Keratinocyte (primary cell): ENCODE measurements at regions of chr10 and their contacts with region 1.

Region 1: DNA sequence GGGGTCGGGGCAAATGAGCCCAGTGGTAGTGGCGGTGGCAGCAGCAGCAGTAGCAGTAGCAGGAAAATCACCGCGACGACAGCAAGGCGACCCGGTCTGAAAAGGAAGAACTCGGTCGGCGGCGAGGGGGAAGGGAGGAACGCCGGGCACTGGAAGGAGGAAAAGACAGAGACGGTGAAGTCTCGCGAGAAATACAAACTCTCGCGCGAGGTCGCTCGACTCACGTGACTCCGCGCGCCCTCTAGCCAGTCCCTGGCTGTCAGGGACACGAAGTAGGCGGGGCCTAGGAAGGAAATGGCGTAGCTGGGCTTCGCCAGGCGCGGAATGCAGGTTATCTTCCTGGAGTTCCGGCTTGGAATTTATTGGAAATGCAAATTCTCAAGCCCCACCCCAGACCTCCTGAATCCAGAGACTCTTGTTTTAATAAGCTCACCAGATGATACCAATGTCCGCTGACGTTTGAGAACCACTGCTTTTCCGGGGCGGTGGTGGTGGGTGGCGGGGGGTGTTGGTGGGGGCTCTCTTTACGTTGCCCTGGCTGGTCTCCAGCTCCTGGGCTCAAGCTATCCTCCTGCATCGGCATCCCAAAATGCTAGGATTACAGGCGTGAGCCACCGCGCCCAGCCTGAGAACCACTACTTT is at the start of gene SMNDC1:
- DNase-seq: peak; percentile 93
- H3K4me3 ChIP-seq: peak within 1 kb of the TSS; percentile 78 to 97 (median 92)
- H3K27ac ChIP-seq: peak within 1 kb of the TSS; percentile 84
- H3K4me1 ChIP-seq: peaks cover 33% of the 10 kb centered on the region
- H3K27me3 ChIP-seq: no peaks in the 10 kb centered on the region
- CTCF ChIP-seq: no peak
- polyA plus RNA-seq, gene SMNDC1: 9.5 to 19.8 TPM (median 17.3 TPM) in 3 replicates

Region 2: DNA sequence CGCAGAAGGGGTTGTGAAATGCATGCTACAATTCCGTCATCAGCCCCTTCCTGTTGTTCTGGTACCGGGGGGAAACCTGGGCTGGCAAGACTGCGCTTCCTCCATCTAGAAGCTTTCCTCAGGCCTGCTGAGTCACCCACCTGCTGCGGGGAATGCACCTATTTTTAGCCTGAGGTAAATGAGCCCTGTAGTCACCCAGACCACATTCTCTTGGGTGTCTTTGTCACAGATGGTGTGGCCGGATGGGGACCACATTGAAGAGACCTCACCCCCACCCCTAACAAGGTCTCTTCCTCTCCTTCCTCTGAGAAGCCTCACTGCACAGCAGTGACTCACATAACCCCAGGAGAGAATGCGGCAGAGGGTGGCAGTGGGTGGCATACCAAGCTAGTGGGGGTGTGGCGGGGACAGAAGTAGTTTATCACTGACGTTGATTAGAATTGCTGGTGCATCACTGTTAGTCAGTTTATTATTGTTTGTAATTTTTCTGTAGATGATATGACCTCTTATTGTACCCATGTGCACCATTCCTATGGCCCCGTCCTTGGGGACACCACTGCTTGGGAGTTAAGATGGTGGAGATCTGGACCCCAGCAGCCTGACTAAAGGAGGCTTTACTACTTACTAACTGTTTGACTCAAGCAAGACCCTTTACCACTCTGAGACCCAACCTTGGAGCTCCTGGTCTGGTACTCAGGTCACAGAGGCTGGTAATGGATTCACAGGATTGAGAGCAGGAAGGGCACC is 109.8 kb after region 1 on chr10:
- dilution Hi-C with region 1: no loop called
- DNase-seq: peak; percentile 94
- H3K4me3 ChIP-seq: no peak overlapping the region
- H3K27ac ChIP-seq: peak overlapping the region; percentile 37
- H3K4me1 ChIP-seq: peaks cover 46% of the 10 kb centered on the region
- H3K27me3 ChIP-seq: no peaks in the 10 kb centered on the region
- CTCF ChIP-seq: no peak

Region 3: DNA sequence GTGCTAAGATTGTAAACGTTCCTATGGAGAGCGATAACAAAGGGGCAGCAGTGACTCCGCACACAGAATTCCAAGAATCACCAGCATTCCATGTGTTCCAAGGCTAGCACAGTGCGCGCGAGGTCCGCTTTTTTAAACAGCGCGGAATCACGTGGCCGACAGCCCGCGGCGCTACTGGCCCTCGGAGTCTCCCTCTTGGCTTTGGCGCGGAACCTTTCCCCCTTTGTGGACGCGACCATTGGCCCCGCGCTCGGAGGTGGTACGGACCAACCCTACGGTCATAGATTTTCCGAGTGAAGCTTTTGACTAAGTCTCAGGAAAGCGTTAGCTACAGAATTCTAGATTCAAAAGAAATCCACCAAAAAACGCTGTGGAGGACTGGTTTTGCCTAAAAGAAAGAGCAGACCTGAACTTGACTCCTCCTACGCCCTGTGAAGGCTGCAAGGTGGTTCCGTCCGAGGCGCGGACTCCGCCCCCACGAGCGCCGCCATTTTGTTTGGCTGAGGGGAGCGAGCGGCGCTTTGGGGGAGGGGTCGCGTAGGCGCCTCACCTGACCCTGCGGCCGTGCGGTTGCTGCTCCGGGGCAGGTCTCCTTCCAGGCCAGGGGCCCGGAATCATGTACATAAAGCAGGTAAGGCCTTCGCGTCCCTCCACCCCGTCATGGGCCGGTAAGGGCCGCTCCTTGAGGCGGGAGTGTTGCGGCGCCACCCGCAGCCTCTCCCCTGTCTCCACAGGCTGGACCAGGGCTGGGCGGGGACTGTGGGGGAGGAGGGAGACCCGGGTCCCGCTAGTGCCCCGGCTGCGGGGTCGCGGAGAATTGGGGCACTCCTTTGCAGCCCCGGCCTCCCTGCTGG is 262.5 kb after region 1 on chr10 and contains the start of gene SMC3:
- dilution Hi-C with region 1: loop called (anchors 25 kb)
- DNase-seq: peak; percentile 38
- H3K4me3 ChIP-seq: peak within 1 kb of the TSS; percentile 89 to 98 (median 90)
- H3K27ac ChIP-seq: peak within 1 kb of the TSS; percentile 97
- H3K4me1 ChIP-seq: peaks cover 10% of the 10 kb centered on the region
- H3K27me3 ChIP-seq: no peaks in the 10 kb centered on the region
- CTCF ChIP-seq: no peak
- polyA plus RNA-seq, gene SMC3: 6.2 to 16.3 TPM (median 12.2 TPM) in 3 replicates

Region 4: GRCh38 chr10:110893559-110894179 is 588.8 kb after region 1 on chr10:
- dilution Hi-C with region 1: loop called (anchors 25 kb)
- DNase-seq: no peak
- H3K4me3 ChIP-seq: no peak overlapping the region
- H3K27ac ChIP-seq: no peak overlapping the region
- H3K4me1 ChIP-seq: peaks cover 3% of the 10 kb centered on the region
- H3K27me3 ChIP-seq: no peaks in the 10 kb centered on the region
- CTCF ChIP-seq: peak in 2 of 3 experiments; percentile 27 to 32